ENCODE measurements at regions of chr10 and their contacts with region 1.

Region 1: GRCh38 chr10:125928928-125929585 is 32.7 kb downstream of the FANK1 start:
- DNase-seq: no peak
- H3K4me3 ChIP-seq: no peak overlapping the region
- H3K4me3 Mint-ChIP-seq: no peak overlapping the region
- H3K27ac Mint-ChIP-seq: no peak overlapping the region
- H3K4me1 ChIP-seq: 0 out of 2 replicates have a peak, but pooled peaks cover 6% of the 10 kb centered on the region
- H3K4me1 Mint-ChIP-seq: peaks cover 6% of the 10 kb centered on the region
- H3K27me3 ChIP-seq: no peaks in the 10 kb centered on the region
- H3K27me3 Mint-ChIP-seq: peaks cover 7% of the 10 kb centered on the region
- CTCF ChIP-seq: no peak

Region 2: GRCh38 chr10:125868372-125868975 is 60.6 kb before region 1 on chr10:
- CTCF ChIA-PET with region 1: interaction called, 4 read pairs
- POLR2A ChIA-PET with region 1: interaction called, 7 read pairs
- intact Hi-C with region 1: loop called (anchors 1 kb)
- DNase-seq: peak in 1 of 2 experiments; percentile 56
- H3K4me3 ChIP-seq: no peak overlapping the region
- H3K4me3 Mint-ChIP-seq: no peak overlapping the region
- H3K27ac Mint-ChIP-seq: no peak overlapping the region
- H3K4me1 ChIP-seq: no peaks in the 10 kb centered on the region
- H3K4me1 Mint-ChIP-seq: peaks cover 6% of the 10 kb centered on the region
- H3K27me3 ChIP-seq: no peaks in the 10 kb centered on the region
- H3K27me3 Mint-ChIP-seq: no peaks in the 10 kb centered on the region
- CTCF ChIP-seq: peak; percentile 79 to 83

Region 3: GRCh38 chr10:125976960-125977603 is 48.0 kb after region 1 on chr10:
- CTCF ChIA-PET with region 1: interaction called, 4 read pairs
- POLR2A ChIA-PET with region 1: interaction called, 13 read pairs
- intact Hi-C with region 1: no loop called
- DNase-seq: no peak
- H3K4me3 ChIP-seq: no peak overlapping the region
- H3K4me3 Mint-ChIP-seq: no peak overlapping the region
- H3K27ac Mint-ChIP-seq: no peak overlapping the region
- H3K4me1 ChIP-seq: no peaks in the 10 kb centered on the region
- H3K4me1 Mint-ChIP-seq: no peaks in the 10 kb centered on the region
- H3K27me3 ChIP-seq: no peaks in the 10 kb centered on the region
- H3K27me3 Mint-ChIP-seq: no peaks in the 10 kb centered on the region
- CTCF ChIP-seq: no peak

Region 4: GRCh38 chr10:126387023-126387921 is 458.2 kb after region 1 on chr10:
- CTCF ChIA-PET with region 1: interaction called, 3 read pairs
- POLR2A ChIA-PET with region 1: no interaction called
- intact Hi-C with region 1: loop called (anchors 1 kb)
- DNase-seq: peak; percentile 47 to 67
- H3K4me3 ChIP-seq: no peak overlapping the region
- H3K4me3 Mint-ChIP-seq: peak overlapping the region; percentile 73
- H3K27ac Mint-ChIP-seq: no peak overlapping the region
- H3K4me1 ChIP-seq: no peaks in the 10 kb centered on the region
- H3K4me1 Mint-ChIP-seq: peaks cover 10% of the 10 kb centered on the region
- H3K27me3 ChIP-seq: no peaks in the 10 kb centered on the region
- H3K27me3 Mint-ChIP-seq: peaks cover 32% of the 10 kb centered on the region
- CTCF ChIP-seq: peak; percentile 74

Region 5: DNA sequence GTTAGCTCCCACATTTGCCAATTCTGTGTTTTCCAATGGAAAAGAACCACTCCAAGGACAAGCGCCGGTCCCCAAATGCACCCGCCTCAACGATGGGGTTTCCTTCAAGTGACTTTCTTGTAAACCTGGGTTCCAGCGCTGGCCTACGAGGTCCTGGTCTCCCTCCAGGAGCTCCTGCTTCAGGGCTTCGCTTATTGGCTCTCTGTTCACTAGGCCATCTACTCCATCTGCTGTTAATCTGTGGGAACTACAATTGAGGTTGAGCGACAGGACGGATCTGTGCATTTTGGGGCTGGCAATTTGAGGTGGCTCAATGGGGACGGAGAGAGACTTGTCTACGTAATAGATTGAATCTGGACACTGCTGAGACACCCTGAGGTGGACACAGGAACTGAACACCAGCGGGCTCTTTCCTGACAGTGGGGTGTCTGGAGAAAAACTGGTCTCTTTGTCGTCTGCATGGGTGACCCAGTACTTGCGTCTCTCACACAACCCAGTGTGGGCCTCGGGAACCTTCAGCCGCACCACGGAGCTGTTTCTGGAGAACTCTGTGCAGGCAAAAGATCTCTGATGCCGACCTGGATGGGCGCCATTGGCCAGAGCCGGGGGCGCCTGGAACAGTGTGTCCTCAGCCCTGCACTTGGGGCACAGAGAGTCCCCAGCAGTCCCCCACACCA is 575.1 kb after region 1 on chr10:
- CTCF ChIA-PET with region 1: interaction called, 13 read pairs
- POLR2A ChIA-PET with region 1: no interaction called
- intact Hi-C with region 1: loop called (anchors 1 kb)
- DNase-seq: peak; percentile 45 to 71
- H3K4me3 ChIP-seq: no peak overlapping the region
- H3K4me3 Mint-ChIP-seq: no peak overlapping the region
- H3K27ac Mint-ChIP-seq: no peak overlapping the region
- H3K4me1 ChIP-seq: no peaks in the 10 kb centered on the region
- H3K4me1 Mint-ChIP-seq: no peaks in the 10 kb centered on the region
- H3K27me3 ChIP-seq: no peaks in the 10 kb centered on the region
- H3K27me3 Mint-ChIP-seq: peaks cover 13% of the 10 kb centered on the region
- CTCF ChIP-seq: peak; percentile 71 to 78

Region 6: DNA sequence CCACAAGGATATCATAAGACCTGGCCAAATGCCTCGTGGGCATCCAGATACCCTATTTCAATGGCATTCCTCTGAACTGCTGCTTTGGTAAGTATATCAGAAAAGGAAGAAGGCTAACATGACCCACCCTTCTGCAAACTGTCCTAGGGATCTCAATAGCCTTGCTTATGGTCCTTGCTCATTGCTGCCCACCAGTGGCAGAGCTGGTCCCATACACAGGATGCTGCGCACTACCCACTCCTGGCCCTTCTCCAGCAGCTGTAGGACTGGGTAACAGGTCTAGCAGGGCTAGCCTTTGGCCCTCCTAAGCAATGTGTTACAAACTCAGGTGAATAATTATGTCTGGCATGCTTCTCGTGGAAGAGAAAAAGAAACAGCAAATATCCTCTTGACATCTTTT is 668.9 kb after region 1 on chr10:
- CTCF ChIA-PET with region 1: no interaction called
- POLR2A ChIA-PET with region 1: no interaction called
- intact Hi-C with region 1: loop called (anchors 5 kb)
- DNase-seq: peak; percentile 48 to 49
- H3K4me3 ChIP-seq: no peak overlapping the region
- H3K4me3 Mint-ChIP-seq: no peak overlapping the region
- H3K27ac Mint-ChIP-seq: no peak overlapping the region
- H3K4me1 ChIP-seq: no peaks in the 10 kb centered on the region
- H3K4me1 Mint-ChIP-seq: no peaks in the 10 kb centered on the region
- H3K27me3 ChIP-seq: no peaks in the 10 kb centered on the region
- H3K27me3 Mint-ChIP-seq: peaks cover 5% of the 10 kb centered on the region
- CTCF ChIP-seq: peak; percentile 42 to 74